Activated CD4-positive, alpha-beta memory T cell treated with anti-CD3 and anti-CD28 coated beads for 36 hours (primary cell): ENCODE measurements at regions of chr6 and their contacts with region 1.

Region 1: GRCh38 chr6:24774696-24775519 is at the start of gene GMNN:
- DNase-seq: peak; percentile 98
- H3K4me3 Mint-ChIP-seq: peak within 1 kb of the TSS; percentile 99
- H3K27ac Mint-ChIP-seq: peak within 1 kb of the TSS; percentile 100
- H3K4me1 Mint-ChIP-seq: peaks cover 27% of the 10 kb centered on the region
- H3K27me3 Mint-ChIP-seq: no peaks in the 10 kb centered on the region
- total RNA-seq, gene GMNN: 76.5 to 77.4 TPM

Region 2: DNA sequence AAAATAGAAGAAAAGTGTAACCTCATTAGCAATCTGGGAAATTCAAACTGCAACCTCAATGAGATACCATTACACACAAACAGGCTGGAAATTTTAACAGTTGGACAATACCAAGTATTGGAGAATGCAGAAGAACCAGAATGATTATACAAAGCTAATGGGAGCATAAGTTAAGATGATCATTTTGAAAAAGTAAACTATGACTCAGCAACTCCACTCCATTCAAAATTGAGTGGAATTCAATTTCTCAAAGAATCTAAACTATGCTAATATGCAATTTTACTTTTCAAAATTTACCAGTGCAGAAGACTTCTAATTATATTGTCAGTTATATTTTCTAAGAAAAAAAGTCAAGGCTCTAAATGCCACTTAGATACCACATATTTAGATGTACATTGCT is 302.7 kb before region 1 on chr6:
- CTCF ChIA-PET with region 1: no interaction called
- POLR2A ChIA-PET with region 1: no interaction called
- intact Hi-C with region 1: no loop called
- DNase-seq: no peak
- H3K4me3 Mint-ChIP-seq: no peak overlapping the region
- H3K27ac Mint-ChIP-seq: no peak overlapping the region
- H3K4me1 Mint-ChIP-seq: no peaks in the 10 kb centered on the region
- H3K27me3 Mint-ChIP-seq: no peaks in the 10 kb centered on the region

Region 3: GRCh38 chr6:24666641-24667377 is 108.1 kb before region 1 on chr6 and contains the starts of genes ACOT13 and TDP2:
- CTCF ChIA-PET with region 1: no interaction called
- POLR2A ChIA-PET with region 1: no interaction called
- intact Hi-C with region 1: loop called (anchors 2 kb)
- DNase-seq: peak; percentile 98
- H3K4me3 Mint-ChIP-seq: peak within 1 kb of the TSS; percentile 95
- H3K27ac Mint-ChIP-seq: peak within 1 kb of the TSS; percentile 93
- H3K4me1 Mint-ChIP-seq: peaks cover 53% of the 10 kb centered on the region
- H3K27me3 Mint-ChIP-seq: no peaks in the 10 kb centered on the region
- total RNA-seq, gene ACOT13: 33.7 to 35.9 TPM
- total RNA-seq, gene TDP2: 47.5 to 48.6 TPM

Region 4: GRCh38 chr6:24743265-24743943 is 31.5 kb before region 1 on chr6:
- CTCF ChIA-PET with region 1: no interaction called
- POLR2A ChIA-PET with region 1: interaction called, 5 read pairs
- intact Hi-C with region 1: loop called (anchors 1 kb)
- DNase-seq: peak; percentile 66
- H3K4me3 Mint-ChIP-seq: peak overlapping the region; percentile 47
- H3K27ac Mint-ChIP-seq: peak overlapping the region; percentile 91
- H3K4me1 Mint-ChIP-seq: peaks cover 25% of the 10 kb centered on the region
- H3K27me3 Mint-ChIP-seq: peaks cover 1% of the 10 kb centered on the region

Region 5: DNA sequence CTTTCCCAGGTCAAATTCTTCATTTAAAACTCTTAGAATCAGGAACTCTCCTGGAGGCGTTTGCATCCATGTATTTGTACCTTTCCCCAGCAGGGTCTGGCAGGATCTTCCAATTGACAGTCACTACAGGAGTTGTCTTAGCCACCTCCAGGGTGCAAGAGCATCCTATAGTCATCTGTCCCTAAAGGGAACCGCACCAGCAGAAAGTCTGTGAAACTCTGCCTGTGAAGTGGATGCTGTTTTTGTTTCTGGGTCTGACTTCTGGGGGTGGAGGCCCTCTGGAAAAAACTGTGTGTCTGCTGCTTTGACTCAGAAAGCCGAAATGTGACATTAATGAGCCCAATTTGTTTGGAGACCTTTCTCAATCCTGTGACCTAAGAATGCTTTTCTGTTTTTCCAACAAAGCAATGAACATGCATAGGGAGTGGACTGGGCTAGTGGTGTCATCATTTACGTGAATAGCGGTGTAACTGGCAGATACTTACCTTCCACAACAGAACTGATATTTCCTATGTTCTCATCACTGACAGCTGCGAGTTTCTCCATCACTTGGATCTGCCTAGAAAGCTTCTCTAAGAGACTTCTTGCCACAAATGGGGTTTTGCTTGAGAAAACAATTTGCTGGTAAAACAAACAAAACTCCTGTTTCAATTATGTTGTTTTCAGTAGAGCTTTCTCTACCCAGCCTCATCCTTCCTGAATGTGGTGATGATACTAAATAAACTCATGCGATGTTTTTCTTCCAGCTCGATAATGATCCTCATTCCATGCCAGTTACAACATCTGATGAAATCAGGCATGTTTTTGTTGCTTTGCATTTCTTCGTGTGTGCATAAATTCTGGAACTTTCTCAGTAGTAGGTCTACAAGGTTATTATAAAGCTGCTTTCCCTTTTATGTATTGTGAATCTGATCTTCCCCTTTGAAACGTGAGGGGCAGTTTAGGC is 57.1 kb after region 1 on chr6:
- CTCF ChIA-PET with region 1: no interaction called
- POLR2A ChIA-PET with region 1: no interaction called
- intact Hi-C with region 1: loop called (anchors 5 kb)
- DNase-seq: peak; percentile 47
- H3K4me3 Mint-ChIP-seq: no peak overlapping the region
- H3K27ac Mint-ChIP-seq: peak overlapping the region; percentile 72
- H3K4me1 Mint-ChIP-seq: peaks cover 50% of the 10 kb centered on the region
- H3K27me3 Mint-ChIP-seq: no peaks in the 10 kb centered on the region